Activated T-helper 1 cell treated with anti-CD3 and anti-CD28 coated beads, Interleukin-12 subunit alpha, Interleukin-12 subunit beta, Interleukin-2, Interleukin-4 antibody, amounts not matched to agents 30 ng/mL and 10 ng/mL and 1 ng/mL, durations not matched to agents 14 hours and 24 hours and 36 hours (primary cell): ENCODE measurements at regions of chr4 and their contacts with region 1.

Region 1: GRCh38 chr4:154506253-154506652 is 14.7 kb upstream of the DCHS2 start:
- DNase-seq: no peak
- H3K4me3 Mint-ChIP-seq: no peak overlapping the region
- H3K27ac Mint-ChIP-seq: no peak overlapping the region
- H3K4me1 Mint-ChIP-seq: no peaks in the 10 kb centered on the region
- H3K27me3 Mint-ChIP-seq: peaks cover 32% of the 10 kb centered on the region

Region 2: DNA sequence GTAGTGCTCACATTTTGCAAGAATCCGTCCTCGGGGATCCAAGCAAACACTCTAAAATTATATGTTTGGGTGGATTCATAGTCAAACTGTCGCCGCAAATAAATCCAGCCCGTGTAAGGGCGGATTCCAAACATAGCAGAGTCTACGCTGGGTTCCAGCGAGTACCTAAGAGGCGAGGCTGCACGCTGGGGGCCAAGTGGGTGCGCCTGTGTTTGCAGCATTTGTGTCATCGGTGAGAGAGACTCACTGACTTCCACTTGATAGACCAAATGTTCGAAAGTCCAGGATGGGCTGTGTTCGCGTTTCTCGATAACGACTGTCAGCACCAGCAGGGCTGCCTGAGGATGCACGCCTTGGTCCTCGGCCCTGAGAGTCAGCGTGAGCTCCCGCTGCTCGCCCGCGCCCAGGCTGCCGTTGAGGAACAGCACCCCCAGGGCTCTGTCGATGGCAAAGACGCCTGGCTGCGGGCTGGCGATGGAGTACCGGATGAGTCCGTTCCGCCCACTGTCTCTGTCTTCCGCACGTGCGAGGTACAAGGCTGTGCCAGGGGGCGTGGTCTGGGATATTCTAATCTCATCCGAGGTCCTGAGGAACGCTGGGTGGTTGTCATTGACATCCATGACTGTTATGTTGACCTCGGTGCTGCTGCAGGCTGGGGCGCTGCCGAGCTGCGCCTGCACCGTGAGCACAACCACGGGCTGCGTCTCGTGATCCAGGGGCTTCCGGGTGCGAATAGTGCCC is 173.4 kb before region 1 on chr4:
- intact Hi-C with region 1: loop called (anchors 1 kb)
- DNase-seq: peak; percentile 27
- H3K4me3 Mint-ChIP-seq: peak overlapping the region; percentile 78
- H3K27ac Mint-ChIP-seq: no peak overlapping the region
- H3K4me1 Mint-ChIP-seq: peaks cover 10% of the 10 kb centered on the region
- H3K27me3 Mint-ChIP-seq: peaks cover 47% of the 10 kb centered on the region